Activated CD4-positive, alpha-beta memory T cell treated with anti-CD3 and anti-CD28 coated beads, Interleukin-2, amount 10 ng/mL, durations not matched to agents 7 days and 5 days (primary cell): ENCODE measurements at regions of chr15 and their contacts with region 1.

Region 1: GRCh38 chr15:58475573-58476524 is 44.1 kb downstream of the LIPC start:
- DNase-seq: no peak
- H3K4me3 Mint-ChIP-seq: no peak overlapping the region
- H3K27ac Mint-ChIP-seq: peak overlapping the region; percentile 81
- H3K4me1 Mint-ChIP-seq: peaks cover 62% of the 10 kb centered on the region
- H3K27me3 Mint-ChIP-seq: no peaks in the 10 kb centered on the region

Region 2: GRCh38 chr15:58457381-58457965 is 18.4 kb before region 1 on chr15:
- CTCF ChIA-PET with region 1: interaction called, 5 read pairs
- POLR2A ChIA-PET with region 1: interaction called, 28 read pairs
- DNase-seq: peak; percentile 53
- H3K4me3 Mint-ChIP-seq: no peak overlapping the region
- H3K27ac Mint-ChIP-seq: no peak overlapping the region
- H3K4me1 Mint-ChIP-seq: peaks cover 62% of the 10 kb centered on the region
- H3K27me3 Mint-ChIP-seq: no peaks in the 10 kb centered on the region

Region 3: DNA sequence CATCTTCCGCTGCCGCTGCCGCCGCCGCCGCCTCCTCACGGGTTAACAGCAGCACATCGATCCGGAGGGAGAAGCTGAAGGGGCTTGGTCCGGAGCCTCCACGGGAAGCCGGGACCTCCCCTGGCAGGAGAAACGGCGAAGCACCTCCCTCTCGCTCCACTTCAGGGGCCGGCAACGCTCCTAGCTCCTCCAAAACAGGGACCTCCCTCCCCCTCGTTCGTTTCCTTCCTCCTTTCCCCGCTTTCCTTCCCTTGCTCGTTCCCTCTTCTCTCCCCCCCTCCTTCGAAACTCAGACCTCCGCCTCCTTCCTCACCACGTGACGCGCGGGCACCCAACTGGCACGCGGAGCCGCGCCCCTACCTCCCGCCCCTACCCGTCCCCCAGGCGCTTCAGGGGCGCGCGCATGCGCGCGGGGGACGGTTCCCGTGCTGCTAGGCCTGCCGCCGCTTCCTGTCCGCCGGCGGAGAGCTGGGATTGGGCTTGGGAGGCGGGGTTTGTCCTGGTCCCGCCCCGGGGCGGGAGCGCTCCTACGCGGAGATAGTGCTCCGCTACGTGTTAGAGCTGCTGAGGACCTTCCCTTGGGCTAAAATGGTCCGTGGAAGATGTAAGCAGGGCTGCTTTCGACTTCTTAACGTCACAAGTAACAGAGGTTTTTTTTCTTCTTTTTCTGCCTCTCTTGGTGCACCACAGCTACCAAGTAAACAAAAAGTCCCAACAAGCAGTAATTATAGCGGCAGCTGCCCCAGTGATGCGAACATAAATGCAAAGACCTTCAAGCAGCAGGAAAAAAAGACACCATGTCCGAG is 273.9 kb after region 1 on chr15 and contains the start of gene ADAM10:
- CTCF ChIA-PET with region 1: no interaction called
- POLR2A ChIA-PET with region 1: interaction called, 12 read pairs
- DNase-seq: peak; percentile 99
- H3K4me3 Mint-ChIP-seq: peak within 1 kb of the TSS; percentile 96
- H3K27ac Mint-ChIP-seq: peak within 1 kb of the TSS; percentile 93
- H3K4me1 Mint-ChIP-seq: peaks cover 41% of the 10 kb centered on the region
- H3K27me3 Mint-ChIP-seq: peaks cover 5% of the 10 kb centered on the region
- total RNA-seq, gene ADAM10: 147 to 150 TPM

Region 4: GRCh38 chr15:59116141-59116540 is 640.3 kb after region 1 on chr15:
- CTCF ChIA-PET with region 1: no interaction called
- POLR2A ChIA-PET with region 1: no interaction called
- DNase-seq: no peak
- H3K4me3 Mint-ChIP-seq: no peak overlapping the region
- H3K27ac Mint-ChIP-seq: no peak overlapping the region
- H3K4me1 Mint-ChIP-seq: peaks cover 7% of the 10 kb centered on the region
- H3K27me3 Mint-ChIP-seq: no peaks in the 10 kb centered on the region